PC-9 (cell line): ENCODE measurements at regions of chr2 and their contacts with region 1.

Region 1: DNA sequence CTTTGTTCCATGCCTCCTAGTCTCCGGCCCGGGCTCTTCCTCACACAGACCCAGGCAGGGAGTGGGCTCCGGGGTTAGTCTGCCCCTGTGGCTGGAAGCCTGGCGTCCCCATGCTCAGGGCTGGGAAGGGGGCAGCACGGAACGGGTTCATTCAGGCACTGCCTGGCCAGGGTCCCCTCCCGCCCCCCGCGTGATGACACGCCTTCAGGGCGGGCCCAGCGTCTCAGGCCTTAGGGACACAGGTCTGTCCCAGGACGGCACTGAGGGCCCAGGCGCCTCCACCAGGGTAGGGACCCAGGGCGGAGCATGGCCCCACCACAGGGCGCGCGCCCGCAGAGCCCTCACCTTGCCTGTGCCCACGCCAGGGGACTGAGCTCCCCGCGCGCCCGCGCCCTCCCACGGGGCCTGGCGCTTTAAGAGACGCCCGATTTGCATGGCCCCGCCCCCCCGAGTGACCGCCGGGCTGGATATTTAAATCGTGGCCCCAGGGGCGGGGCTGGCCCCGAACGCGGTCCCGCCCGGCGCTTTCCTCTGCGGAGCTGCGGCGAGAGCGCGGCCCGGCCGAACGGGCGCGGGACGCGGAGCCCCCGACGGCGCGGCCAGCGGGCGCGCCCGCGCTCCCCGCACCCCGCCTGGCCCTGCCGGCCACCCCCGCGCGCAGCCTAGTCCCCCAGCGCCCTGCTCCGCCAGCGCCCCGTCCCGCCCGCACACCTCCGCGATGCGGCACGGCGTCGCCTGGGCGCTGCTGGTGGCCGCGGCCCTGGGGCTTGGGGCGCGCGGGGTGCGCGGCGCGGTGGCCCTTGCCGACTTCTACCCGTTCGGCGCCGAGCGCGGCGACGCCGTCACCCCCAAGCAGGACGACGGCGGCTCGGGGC is at the start of gene SNED1:
- DNase-seq: peak; percentile 64 to 94
- H3K4me3 ChIP-seq: peak within 1 kb of the TSS; percentile 82
- H3K27ac ChIP-seq: no peak within 1 kb of the TSS
- H3K4me1 ChIP-seq: 0 out of 2 replicates have a peak, but pooled peaks cover 4% of the 10 kb centered on the region
- H3K27me3 ChIP-seq: peaks cover 19% of the 10 kb centered on the region
- CTCF ChIP-seq: no peak
- total RNA-seq, gene SNED1: 2.8 and 9.6 TPM in 2 replicates

Region 2: DNA sequence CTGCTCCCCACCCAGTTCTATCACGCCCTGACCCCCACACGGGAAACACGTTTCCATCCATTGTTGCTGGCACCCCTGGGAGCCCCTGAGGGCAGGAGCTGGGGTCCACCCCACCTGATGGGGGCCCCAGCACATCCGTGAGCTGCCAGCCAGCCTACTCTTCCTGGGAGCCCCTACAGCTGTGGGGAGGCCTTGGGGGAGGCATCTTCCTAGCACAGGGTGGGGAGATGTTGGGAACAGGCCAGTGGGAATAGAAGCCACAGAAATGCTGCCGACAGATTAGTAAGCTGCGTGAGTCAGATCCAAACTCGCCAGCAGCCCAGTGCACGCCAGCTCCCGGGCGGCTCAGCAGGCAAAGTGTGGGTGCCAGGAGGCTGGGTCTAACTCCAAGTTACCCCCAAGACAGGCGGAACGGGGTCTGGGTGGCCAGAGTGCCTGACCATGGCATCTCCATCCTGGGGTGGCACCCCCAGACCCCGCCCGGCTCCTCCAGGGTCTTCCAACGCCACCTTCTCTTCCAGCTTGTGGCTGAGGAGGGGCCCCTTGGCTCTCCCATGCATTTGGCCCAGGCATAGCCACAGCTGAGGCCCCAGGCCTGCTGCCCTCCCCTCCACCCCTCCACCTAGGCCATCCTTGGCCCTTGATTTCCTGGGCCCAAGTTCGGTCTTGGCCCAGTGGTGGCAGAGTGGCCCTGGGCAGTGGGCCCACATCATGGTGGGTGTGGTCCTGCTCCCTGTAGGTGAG is 76.9 kb before region 1 on chr2:
- CTCF ChIA-PET with region 1: no interaction called
- POLR2A ChIA-PET with region 1: no interaction called
- intact Hi-C with region 1: no loop called
- DNase-seq: peak; percentile 65 to 75
- H3K4me3 ChIP-seq: no peak overlapping the region
- H3K27ac ChIP-seq: no peak overlapping the region
- H3K4me1 ChIP-seq: no peaks in the 10 kb centered on the region
- H3K27me3 ChIP-seq: no peaks in the 10 kb centered on the region; the same call in 1 of the 2 replicates
- CTCF ChIP-seq: no peak

Region 3: GRCh38 chr2:241009601-241010530 is 11.5 kb after region 1 on chr2:
- CTCF ChIA-PET with region 1: interaction called, 3 read pairs
- POLR2A ChIA-PET with region 1: no interaction called
- intact Hi-C with region 1: loop called (anchors 1 kb)
- DNase-seq: peak; percentile 76 to 78
- H3K4me3 ChIP-seq: peak overlapping the region; percentile 34; the same call in 1 of the 2 replicates
- H3K27ac ChIP-seq: peak overlapping the region; percentile 18
- H3K4me1 ChIP-seq: peaks cover 17% of the 10 kb centered on the region
- H3K27me3 ChIP-seq: no peaks in the 10 kb centered on the region
- CTCF ChIP-seq: no peak

Region 4: GRCh38 chr2:241036397-241036963 is 38.1 kb after region 1 on chr2:
- CTCF ChIA-PET with region 1: no interaction called
- POLR2A ChIA-PET with region 1: no interaction called
- intact Hi-C with region 1: loop called (anchors 1 kb)
- DNase-seq: peak; percentile 73 to 88
- H3K4me3 ChIP-seq: peak overlapping the region; percentile 37; the same call in 1 of the 2 replicates
- H3K27ac ChIP-seq: no peak overlapping the region
- H3K4me1 ChIP-seq: peaks cover 8% of the 10 kb centered on the region
- H3K27me3 ChIP-seq: peaks cover 36% of the 10 kb centered on the region
- CTCF ChIP-seq: no peak

Region 5: GRCh38 chr2:241064008-241064801 is 65.8 kb after region 1 on chr2:
- CTCF ChIA-PET with region 1: no interaction called
- POLR2A ChIA-PET with region 1: no interaction called
- intact Hi-C with region 1: loop called (anchors 5 kb)
- DNase-seq: peak; percentile 46 to 84
- H3K4me3 ChIP-seq: peak overlapping the region; percentile 32; the same call in 1 of the 2 replicates
- H3K27ac ChIP-seq: no peak overlapping the region
- H3K4me1 ChIP-seq: peaks cover 7% of the 10 kb centered on the region
- H3K27me3 ChIP-seq: peaks cover 25% of the 10 kb centered on the region
- CTCF ChIP-seq: no peak